Mammary epithelial cell (primary cell): ENCODE measurements at regions of chr1 and their contacts with region 1.

Region 1: GRCh38 chr1:29235955-29236684 is at the start of gene PTPRU:
- DNase-seq: peak; percentile 69
- H3K4me3 ChIP-seq: peak within 1 kb of the TSS; percentile 56 to 83 (median 71)
- H3K27ac ChIP-seq: peak within 1 kb of the TSS; percentile 66
- H3K4me1 ChIP-seq: peaks cover 32% of the 10 kb centered on the region
- H3K27me3 ChIP-seq: no peaks in the 10 kb centered on the region
- CTCF ChIP-seq: peak; percentile 27 to 50
- total RNA-seq, gene PTPRU: 38.9 to 46.3 TPM

Region 2: GRCh38 chr1:29136391-29136915 is 99.7 kb before region 1 on chr1:
- CTCF ChIA-PET with region 1: no interaction called
- dilution Hi-C with region 1: no loop called
- in situ Hi-C with region 1: no loop called
- intact Hi-C with region 1: no loop called
- DNase-seq: peak; percentile 28
- H3K4me3 ChIP-seq: no peak overlapping the region
- H3K27ac ChIP-seq: no peak overlapping the region
- H3K4me1 ChIP-seq: peaks cover 4% of the 10 kb centered on the region
- H3K27me3 ChIP-seq: no peaks in the 10 kb centered on the region
- CTCF ChIP-seq: no peak

Region 3: DNA sequence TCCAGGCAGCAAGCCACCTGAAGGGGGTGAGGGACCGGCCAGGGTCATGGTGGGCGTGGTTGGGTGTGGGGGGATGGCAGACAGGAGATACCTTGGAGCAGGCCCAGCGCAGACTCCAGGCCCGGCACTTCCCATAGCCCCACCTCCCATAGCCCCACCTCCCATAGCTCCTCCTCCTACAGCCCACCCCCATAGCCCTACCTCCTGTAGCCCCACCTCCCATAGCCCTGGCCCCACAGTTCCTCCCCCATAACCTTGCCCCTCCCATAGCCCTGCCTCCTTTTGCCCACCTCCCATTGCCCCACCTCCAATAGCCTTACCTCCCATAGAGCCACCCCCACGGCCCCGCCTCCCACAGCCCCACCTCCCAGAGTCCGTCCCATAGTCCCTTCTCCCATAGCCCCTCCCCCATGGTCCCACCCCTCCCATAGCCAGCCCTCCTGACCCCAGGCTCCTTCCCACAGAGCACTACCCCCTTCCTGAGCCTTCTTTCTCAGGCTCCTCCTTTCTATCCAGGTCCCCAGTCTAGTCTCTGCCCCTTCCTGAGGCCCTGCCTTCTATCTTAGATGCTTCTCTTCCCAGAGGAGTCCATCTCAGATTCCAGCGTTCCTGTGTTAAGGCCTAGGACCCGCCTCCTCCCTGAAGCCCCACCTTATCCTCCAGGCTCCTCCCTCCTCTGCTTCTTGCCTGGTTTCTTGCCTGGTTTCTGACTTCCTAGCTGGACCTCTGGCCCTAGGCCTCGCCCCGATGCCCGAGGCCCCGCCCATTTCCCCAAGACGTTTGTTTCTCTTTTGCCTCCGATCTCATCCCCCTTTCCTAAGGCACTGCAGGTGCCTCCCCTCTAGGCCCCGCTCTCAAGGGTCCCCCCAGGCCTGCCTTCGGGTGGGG is 47.0 kb after region 1 on chr1:
- CTCF ChIA-PET with region 1: no interaction called
- dilution Hi-C with region 1: no loop called
- in situ Hi-C with region 1: no loop called
- intact Hi-C with region 1: loop called (anchors 5 kb)
- DNase-seq: peak; percentile 8
- H3K4me3 ChIP-seq: no peak overlapping the region
- H3K27ac ChIP-seq: no peak overlapping the region
- H3K4me1 ChIP-seq: peaks cover 19% of the 10 kb centered on the region
- H3K27me3 ChIP-seq: no peaks in the 10 kb centered on the region
- CTCF ChIP-seq: no peak

Region 4: DNA sequence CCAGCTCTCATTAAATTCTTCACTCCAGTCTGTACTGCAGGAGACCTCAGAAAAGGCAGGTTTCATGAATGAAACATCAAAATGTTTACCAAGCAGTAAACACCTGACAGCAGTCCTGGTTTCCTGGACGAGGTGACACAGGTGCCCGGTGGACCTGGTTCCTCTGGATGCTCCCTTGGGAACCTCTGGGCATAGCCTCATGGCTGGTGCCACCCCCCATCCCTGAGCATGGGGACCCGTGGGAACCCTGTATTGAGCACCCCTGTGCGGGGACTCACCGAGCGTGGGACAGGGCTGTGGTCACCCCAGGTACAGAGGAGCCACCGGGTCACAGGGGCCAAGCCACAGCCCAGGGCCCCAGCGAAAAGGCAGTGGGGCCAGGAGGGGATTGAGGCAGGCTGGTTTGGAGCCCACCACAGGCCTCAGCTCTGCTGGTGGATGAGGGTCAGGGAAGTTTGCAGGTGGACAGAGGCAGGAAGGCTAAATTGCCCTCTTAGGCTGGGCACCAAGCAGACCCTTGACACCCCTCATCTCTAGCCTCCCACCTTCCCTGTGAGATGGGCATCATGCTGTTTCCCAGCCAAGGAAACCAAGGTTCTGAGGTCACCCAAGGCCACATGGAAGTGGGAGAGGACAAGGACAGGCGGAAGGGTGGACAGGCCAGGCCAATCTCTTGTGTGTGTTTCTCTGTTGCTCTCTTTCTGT is 158.6 kb after region 1 on chr1:
- CTCF ChIA-PET with region 1: no interaction called
- dilution Hi-C with region 1: no loop called
- in situ Hi-C with region 1: no loop called
- intact Hi-C with region 1: no loop called
- DNase-seq: no peak
- H3K4me3 ChIP-seq: no peak overlapping the region
- H3K27ac ChIP-seq: no peak overlapping the region
- H3K4me1 ChIP-seq: peaks cover 10% of the 10 kb centered on the region
- H3K27me3 ChIP-seq: no peaks in the 10 kb centered on the region
- CTCF ChIP-seq: no peak

Region 5: GRCh38 chr1:29415156-29415830 is 179.2 kb after region 1 on chr1:
- CTCF ChIA-PET with region 1: no interaction called
- dilution Hi-C with region 1: no loop called
- in situ Hi-C with region 1: no loop called
- intact Hi-C with region 1: loop called (anchors 5 kb)
- DNase-seq: peak; percentile 27
- H3K4me3 ChIP-seq: no peak overlapping the region
- H3K27ac ChIP-seq: no peak overlapping the region
- H3K4me1 ChIP-seq: no peaks in the 10 kb centered on the region
- H3K27me3 ChIP-seq: no peaks in the 10 kb centered on the region
- CTCF ChIP-seq: peak; percentile 13 to 36

Region 6: DNA sequence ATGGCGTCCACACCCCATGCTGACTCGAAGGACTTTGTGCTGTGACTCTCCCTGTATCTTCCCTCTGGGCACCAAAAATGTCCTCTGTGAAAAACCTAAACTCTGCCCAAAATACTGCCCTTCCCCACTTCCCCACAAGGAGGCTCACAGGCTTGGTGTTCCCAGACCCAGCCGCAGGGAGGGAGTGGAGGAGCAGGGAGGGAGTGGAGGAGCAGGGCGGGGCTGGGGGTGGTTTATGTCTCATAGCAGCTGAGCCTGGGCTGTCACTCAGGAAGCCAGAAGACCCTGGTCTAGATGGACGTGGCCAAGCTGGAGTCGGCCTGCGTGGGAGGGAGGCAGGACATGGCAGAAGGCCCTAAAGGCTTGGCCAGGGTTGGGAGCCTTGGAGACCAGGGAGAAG is 461.9 kb after region 1 on chr1:
- CTCF ChIA-PET with region 1: no interaction called
- dilution Hi-C with region 1: loop called (anchors 25 kb)
- in situ Hi-C with region 1: loop called (anchors 25 kb)
- intact Hi-C with region 1: loop called (anchors 2 kb)
- DNase-seq: peak; percentile 51
- H3K4me3 ChIP-seq: no peak overlapping the region
- H3K27ac ChIP-seq: no peak overlapping the region
- H3K4me1 ChIP-seq: no peaks in the 10 kb centered on the region
- H3K27me3 ChIP-seq: no peaks in the 10 kb centered on the region
- CTCF ChIP-seq: peak; percentile 63 to 67

Region 7: DNA sequence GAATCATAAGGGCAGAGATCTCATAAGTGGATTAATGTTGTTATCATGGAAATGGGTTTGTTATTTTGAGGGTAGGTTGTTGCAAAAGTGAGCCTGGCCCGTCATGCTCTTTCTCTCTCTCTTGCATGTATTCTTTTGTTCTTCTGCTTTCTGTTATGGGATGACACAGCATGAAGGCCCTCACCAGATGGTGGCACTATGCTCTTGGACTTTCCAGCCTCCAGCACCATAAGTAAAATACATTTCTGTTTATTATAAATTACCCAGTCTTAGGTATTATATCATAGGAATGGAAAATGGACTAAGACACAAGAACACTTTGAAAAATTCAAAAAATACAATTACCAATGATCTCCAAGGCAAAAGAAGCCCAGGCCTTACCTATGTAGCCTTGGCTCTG is 676.3 kb after region 1 on chr1:
- CTCF ChIA-PET with region 1: no interaction called
- dilution Hi-C with region 1: no loop called
- in situ Hi-C with region 1: no loop called
- intact Hi-C with region 1: loop called (anchors 1 kb)
- DNase-seq: peak; percentile 30
- H3K4me3 ChIP-seq: no peak overlapping the region
- H3K27ac ChIP-seq: no peak overlapping the region
- H3K4me1 ChIP-seq: no peaks in the 10 kb centered on the region
- H3K27me3 ChIP-seq: no peaks in the 10 kb centered on the region
- CTCF ChIP-seq: peak; percentile 41 to 67

Region 8: DNA sequence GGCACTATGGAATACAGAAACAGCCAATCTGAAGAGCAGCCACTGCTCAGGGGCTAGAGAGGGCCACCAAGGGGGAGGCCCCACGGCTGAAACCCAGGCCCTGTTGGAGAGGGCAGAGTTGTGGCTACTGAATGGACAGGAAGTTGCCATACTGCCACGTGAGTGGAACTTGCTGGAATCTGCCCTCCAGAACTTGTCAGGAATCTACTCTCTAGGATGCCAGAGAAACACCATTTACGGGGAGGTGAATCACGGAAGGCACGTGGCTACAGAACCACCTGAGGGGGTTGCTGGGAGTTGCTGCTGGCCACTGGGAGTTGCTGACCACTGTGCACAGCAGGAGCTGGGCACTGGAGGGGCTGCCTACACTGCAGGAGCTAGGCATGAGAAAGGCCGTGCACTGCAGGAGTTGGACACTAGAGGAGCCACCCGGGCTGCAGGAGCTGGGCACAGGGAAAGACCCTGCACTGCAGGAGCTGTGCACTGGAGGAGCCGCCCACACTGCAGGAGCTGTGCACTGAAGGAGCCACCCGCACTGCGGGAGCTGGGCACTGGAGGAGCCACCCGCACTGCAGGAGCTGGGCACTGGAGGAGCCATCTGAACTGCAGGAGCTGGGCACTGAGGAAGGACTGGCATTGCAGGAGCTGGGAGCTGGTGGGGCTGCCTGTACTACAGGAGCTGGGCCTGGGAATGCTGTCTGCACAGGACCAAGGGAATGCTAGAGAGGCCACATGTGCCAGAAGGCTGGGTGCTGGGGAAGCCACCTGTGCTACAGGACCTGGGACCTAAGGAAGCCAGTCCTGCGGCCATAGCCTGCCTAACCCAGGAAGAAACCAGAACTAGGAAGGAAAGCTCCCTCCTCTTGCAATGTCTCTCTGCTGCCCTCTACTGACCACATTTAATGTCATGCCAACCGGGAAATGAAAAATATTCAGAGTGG is 1143.8 kb after region 1 on chr1:
- CTCF ChIA-PET with region 1: no interaction called
- dilution Hi-C with region 1: no loop called
- in situ Hi-C with region 1: no loop called
- intact Hi-C with region 1: loop called (anchors 5 kb)
- DNase-seq: peak; percentile 68
- H3K4me3 ChIP-seq: no peak overlapping the region
- H3K27ac ChIP-seq: no peak overlapping the region
- H3K4me1 ChIP-seq: peaks cover 23% of the 10 kb centered on the region
- H3K27me3 ChIP-seq: no peaks in the 10 kb centered on the region
- CTCF ChIP-seq: peak; percentile 89 to 93